CD8-positive, alpha-beta T cell (primary cell): ENCODE measurements at regions of chr1 and their contacts with region 1.

Region 1: GRCh38 chr1:61453111-61453961 is 271.6 kb downstream of the TM2D1 start:
- DNase-seq: peak; percentile 42 to 81 (median 69)
- ATAC-seq: peak; percentile 87
- H3K4me3 ChIP-seq: no peak overlapping the region
- H3K4me3 Mint-ChIP-seq: no peak overlapping the region
- H3K27ac ChIP-seq: no peak overlapping the region
- H3K27ac Mint-ChIP-seq: peak overlapping the region; percentile 71
- H3K4me1 ChIP-seq: no peaks in the 10 kb centered on the region
- H3K4me1 Mint-ChIP-seq: peaks cover 10% of the 10 kb centered on the region
- H3K27me3 ChIP-seq: no peaks in the 10 kb centered on the region
- H3K27me3 Mint-ChIP-seq: no peaks in the 10 kb centered on the region
- CTCF ChIP-seq: peak; percentile 57

Region 2: GRCh38 chr1:60848583-60849188 is 604.6 kb before region 1 on chr1:
- CTCF ChIA-PET with region 1: no interaction called
- POLR2A ChIA-PET with region 1: no interaction called
- intact Hi-C with region 1: loop called (anchors 2 to 5 kb)
- DNase-seq: peak in 2 of 9 experiments; percentile 7 to 33
- ATAC-seq: no peak
- H3K4me3 ChIP-seq: no peak overlapping the region
- H3K4me3 Mint-ChIP-seq: no peak overlapping the region
- H3K27ac ChIP-seq: no peak overlapping the region
- H3K27ac Mint-ChIP-seq: no peak overlapping the region
- H3K4me1 ChIP-seq: no peaks in the 10 kb centered on the region
- H3K4me1 Mint-ChIP-seq: no peaks in the 10 kb centered on the region
- H3K27me3 ChIP-seq: no peaks in the 10 kb centered on the region
- H3K27me3 Mint-ChIP-seq: peaks cover 13% of the 10 kb centered on the region
- CTCF ChIP-seq: no peak